Activated naive CD4-positive, alpha-beta T cell treated with anti-CD3 and anti-CD28 coated beads for 36 hours (primary cell): ENCODE measurements at regions of chr11 and their contacts with region 1.

Region 1: GRCh38 chr11:47514825-47515647 is 37.9 kb downstream of the CELF1 start:
- DNase-seq: peak; percentile 66
- H3K4me3 Mint-ChIP-seq: no peak overlapping the region
- H3K27ac Mint-ChIP-seq: peak overlapping the region; percentile 28
- H3K4me1 Mint-ChIP-seq: peaks cover 95% of the 10 kb centered on the region
- H3K27me3 Mint-ChIP-seq: no peaks in the 10 kb centered on the region

Region 2: GRCh38 chr11:47276923-47277322 is 238.1 kb before region 1 on chr11:
- CTCF ChIA-PET with region 1: no interaction called
- intact Hi-C with region 1: no loop called
- DNase-seq: no peak
- H3K4me3 Mint-ChIP-seq: no peak overlapping the region
- H3K27ac Mint-ChIP-seq: no peak overlapping the region
- H3K4me1 Mint-ChIP-seq: peaks cover 12% of the 10 kb centered on the region
- H3K27me3 Mint-ChIP-seq: no peaks in the 10 kb centered on the region

Region 3: DNA sequence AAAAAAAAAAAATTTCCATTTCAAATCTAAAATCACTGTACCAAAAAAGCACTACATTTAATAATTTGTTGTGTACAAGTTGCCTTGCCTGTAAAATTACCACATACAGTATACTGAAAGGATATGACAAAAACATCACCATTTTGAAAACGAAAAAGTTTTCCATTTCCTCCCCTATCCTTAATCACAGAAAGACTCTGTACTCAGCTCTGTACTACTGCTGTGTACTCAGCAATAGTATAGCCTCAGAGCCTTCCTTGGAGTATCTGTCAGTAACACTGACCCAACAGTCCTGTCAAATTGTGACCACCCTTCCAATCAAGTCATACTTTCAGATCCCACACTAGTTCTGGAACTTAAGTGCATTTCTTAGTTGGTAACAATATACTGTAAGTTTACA is 10.1 kb before region 1 on chr11:
- CTCF ChIA-PET with region 1: interaction called, 4 read pairs
- intact Hi-C with region 1: loop called (anchors 1 kb)
- DNase-seq: no peak
- H3K4me3 Mint-ChIP-seq: no peak overlapping the region
- H3K27ac Mint-ChIP-seq: peak overlapping the region; percentile 71
- H3K4me1 Mint-ChIP-seq: peaks cover 75% of the 10 kb centered on the region
- H3K27me3 Mint-ChIP-seq: no peaks in the 10 kb centered on the region

Region 4: DNA sequence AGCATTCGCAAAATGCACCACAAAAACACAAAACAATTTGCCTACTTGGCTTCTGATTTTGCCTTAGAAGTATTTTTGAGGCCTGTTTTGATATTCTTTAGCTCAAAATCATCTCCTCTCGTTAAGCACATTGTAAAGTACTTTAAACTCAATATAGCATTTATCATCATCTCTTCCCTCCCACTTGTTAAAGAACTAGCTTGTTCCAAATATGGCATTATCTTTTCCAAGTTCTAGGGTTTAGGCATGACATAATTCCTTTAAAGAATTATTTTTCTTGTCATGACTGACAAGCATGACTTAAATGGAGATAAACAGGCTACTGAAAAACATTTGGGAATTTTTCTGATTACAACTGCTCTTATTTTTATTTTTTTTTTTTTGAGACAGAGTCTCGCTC is 16.6 kb after region 1 on chr11:
- CTCF ChIA-PET with region 1: interaction called, 10 read pairs
- intact Hi-C with region 1: no loop called
- DNase-seq: no peak
- H3K4me3 Mint-ChIP-seq: no peak overlapping the region
- H3K27ac Mint-ChIP-seq: no peak overlapping the region
- H3K4me1 Mint-ChIP-seq: peaks cover 52% of the 10 kb centered on the region
- H3K27me3 Mint-ChIP-seq: no peaks in the 10 kb centered on the region

Region 5: GRCh38 chr11:47538741-47539574 is 23.9 kb after region 1 on chr11:
- CTCF ChIA-PET with region 1: interaction called, 3 read pairs
- intact Hi-C with region 1: loop called (anchors 1 kb)
- DNase-seq: no peak
- H3K4me3 Mint-ChIP-seq: no peak overlapping the region
- H3K27ac Mint-ChIP-seq: peak overlapping the region; percentile 91
- H3K4me1 Mint-ChIP-seq: peaks cover 64% of the 10 kb centered on the region
- H3K27me3 Mint-ChIP-seq: no peaks in the 10 kb centered on the region